GM18951 (cell line): ENCODE measurements at regions of chr6 and their contacts with region 1.

Region 1: GRCh38 chr6:156780102-156780641 is 3.0 kb downstream of the ARID1B start:
- POLR2A ChIP-seq: no peak

Region 2: GRCh38 chr6:157021344-157021992 is 241.3 kb after region 1 on chr6:
- in situ Hi-C with region 1: loop called (anchors 10 kb)
- POLR2A ChIP-seq: peak; percentile 93

Region 3: GRCh38 chr6:157203312-157203744 is 423.2 kb after region 1 on chr6:
- in situ Hi-C with region 1: no loop called
- POLR2A ChIP-seq: no peak